Sciatic nerve (tissue), 2 donors: ENCODE measurements at regions of chr13 and their contacts with region 1.

Region 1: DNA sequence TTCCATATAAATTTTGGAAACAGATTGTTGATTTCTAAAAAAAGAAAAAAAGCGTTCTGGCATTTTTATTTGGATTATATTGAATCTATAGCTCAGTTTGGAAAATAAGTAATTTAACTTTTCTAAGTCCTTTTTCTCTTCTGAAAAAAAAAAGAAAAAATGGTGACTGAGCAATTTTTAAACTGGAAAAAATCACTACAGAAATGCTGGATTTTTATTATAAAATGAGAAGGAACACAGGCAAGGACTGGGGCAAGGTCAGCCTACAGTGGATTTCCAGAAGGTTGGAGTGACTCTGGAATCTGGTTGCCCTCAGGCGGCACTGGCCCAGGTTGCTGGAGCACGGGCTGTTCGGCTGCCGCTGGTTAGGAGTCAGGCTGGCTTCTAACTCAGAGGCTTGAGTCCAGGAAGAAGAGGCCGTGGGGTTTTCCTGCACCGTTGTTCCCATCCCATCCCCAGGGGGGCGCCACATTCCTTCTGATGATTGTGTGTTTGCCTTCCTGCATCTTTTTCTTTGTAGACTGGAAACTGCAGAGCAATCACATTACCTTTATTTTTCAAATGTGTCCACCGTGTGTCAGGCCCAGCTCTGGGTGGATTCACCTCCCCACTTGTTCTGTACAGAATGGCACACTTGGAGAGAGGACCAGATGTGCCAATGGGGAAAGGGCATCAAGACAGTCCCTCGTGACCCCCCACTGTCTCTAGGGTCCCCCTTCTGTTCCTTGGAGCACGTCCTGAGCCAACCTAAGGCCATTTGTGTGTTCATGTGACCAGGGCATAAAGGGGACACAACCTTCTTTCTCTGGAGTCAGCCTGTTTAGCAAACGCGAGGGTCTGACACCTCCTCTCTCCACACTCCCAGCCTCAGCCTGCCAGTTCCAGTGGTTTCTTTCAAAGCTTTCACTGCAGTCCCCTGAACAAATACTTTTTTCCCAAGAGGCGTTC is 44.5 kb upstream of the GTF3A start:
- DNase-seq: no peak
- ATAC-seq: no peak

Region 2: DNA sequence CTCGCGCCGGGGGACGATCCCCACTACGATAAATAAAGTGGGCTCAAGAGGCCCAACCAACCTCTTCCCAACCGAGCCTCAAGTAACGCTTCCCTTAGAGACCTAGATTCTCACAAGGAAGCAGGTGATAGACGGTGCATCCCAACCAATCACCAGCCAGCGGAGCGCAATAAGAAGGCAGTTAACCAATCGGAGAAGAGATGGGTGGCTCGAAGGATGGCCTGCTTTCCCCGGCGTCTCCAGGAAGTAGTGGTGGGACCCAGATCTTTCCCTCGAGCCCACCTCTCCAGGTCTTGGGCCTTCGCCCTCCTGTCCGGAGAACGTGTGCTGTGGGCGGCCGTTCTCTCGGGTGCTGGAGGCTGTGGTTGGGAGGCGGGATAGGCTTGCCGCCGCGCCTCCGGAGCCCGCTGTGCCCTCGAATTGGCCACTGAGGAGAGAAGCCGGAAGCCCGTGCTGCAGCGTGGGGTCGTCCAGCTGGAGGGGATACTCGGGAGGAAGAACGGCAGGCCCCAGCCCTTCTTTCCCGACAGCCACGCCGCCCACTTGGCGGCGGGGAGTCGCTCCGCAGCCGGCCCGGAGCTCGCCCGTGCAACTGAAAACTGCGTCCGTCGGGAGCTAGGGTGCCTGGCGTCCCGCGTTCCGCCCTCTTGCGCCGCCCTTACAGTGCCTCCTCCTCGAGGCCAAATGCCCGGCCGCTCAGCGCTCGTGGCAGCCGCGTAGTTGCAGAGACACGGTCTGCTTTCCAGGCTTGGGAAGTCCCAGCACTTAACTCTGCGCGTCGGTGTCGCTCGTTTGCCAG is 1158.0 kb before region 1 on chr13 and contains the start of gene RNF6:
- intact Hi-C with region 1: no loop called
- DNase-seq: peak; percentile 94
- ATAC-seq: peak; percentile 99
- total RNA-seq, gene RNF6: 29.7 TPM

Region 3: GRCh38 chr13:26656919-26657318 is 723.0 kb before region 1 on chr13:
- intact Hi-C with region 1: no loop called
- DNase-seq: no peak
- ATAC-seq: no peak

Region 4: DNA sequence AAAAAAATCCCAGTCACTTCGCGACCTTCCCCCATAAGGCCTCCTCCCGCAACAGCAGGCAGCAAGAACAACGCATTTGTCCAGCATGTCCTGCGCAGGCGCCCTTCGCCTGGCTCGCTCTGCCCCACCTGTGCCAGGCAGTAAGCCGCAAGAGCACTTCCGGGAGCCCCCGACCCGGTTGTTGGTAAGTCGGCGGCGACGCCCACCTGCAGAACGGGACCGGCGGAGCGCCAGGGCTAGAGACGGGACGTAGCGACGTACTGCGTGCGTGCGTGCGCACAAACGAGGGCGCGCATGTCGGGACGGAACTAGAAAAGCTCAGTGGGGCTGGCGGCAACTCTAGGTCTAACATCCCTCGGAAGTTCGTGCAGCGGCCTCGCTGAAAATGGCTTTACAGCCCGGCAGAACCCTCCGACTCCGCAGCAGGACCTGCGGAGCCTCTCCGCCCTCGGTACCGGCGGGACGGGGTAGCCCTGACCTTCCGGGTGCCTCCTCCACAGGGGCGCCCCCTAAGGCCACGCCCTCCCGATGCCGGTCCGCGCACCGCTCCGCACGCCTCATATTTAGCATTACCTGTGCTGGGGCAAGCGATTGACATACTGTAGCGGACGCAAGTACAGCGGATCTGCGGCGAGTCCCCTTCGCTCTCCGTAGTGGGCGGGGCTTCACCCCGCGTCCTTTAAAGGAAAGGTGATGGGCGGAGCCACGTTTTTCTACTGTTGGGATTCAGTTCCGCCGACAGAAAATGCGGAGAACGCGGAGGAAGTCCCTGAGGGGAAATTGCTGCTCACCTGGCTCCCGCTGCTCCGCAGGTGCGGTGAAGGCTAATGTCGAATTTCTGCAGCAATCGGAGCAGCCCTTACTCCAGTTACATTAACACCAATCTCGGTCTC is 70.2 kb after region 1 on chr13 and contains the start of gene MTIF3:
- intact Hi-C with region 1: loop called (anchors 10 kb)
- DNase-seq: peak; percentile 96
- ATAC-seq: peak; percentile 96
- total RNA-seq, gene MTIF3: 45.5 TPM